Motor neuron (in vitro differentiated cells): ENCODE measurements at regions of chr7 and their contacts with region 1.

Region 1: GRCh38 chr7:85054306-85054705 is 132.6 kb downstream of the SEMA3D start:
- ATAC-seq: peak in 4 of 8 experiments; percentile 21 to 93 (median 42)
- H3K4me3 ChIP-seq: no peak overlapping the region
- H3K27ac ChIP-seq: no peak overlapping the region
- H3K4me1 ChIP-seq: peaks cover 8 to 10% of the 10 kb centered on the region in 2 donors

Region 2: GRCh38 chr7:84821671-84822534 is 232.4 kb before region 1 on chr7:
- in situ Hi-C with region 1: no loop called
- ATAC-seq: no peak
- H3K4me3 ChIP-seq: no peak overlapping the region
- H3K27ac ChIP-seq: no peak overlapping the region
- H3K4me1 ChIP-seq: no peaks in the 10 kb centered on the region

Region 3: DNA sequence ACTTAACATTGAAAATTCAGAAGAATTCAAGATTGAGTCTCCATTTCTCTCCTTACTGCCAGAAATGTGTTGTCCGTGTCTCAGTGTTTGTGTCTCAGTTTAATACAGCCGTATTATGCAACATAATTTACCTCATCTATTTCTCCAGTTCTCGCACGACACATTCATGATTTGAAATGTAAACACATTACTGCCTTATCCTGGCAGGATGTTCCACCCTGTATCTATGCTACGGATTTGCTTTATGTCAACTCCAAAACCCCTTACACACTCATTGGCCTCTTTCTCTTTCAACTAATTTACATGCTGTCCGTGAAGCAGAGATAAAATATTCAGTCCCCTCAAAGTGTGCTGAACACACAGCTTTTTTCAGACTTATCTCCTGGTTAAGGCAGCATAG is 786.2 kb after region 1 on chr7:
- in situ Hi-C with region 1: loop called in 7 of 9 experiments (anchors 10 to 25 kb)
- ATAC-seq: peak in 3 of 8 experiments; percentile 23 to 99 (median 31)
- H3K4me3 ChIP-seq: no peak overlapping the region
- H3K27ac ChIP-seq: no peak overlapping the region
- H3K4me1 ChIP-seq: no peaks in the 10 kb centered on the region